ENCODE measurements at regions of chr2 and their contacts with region 1.

Region 1: DNA sequence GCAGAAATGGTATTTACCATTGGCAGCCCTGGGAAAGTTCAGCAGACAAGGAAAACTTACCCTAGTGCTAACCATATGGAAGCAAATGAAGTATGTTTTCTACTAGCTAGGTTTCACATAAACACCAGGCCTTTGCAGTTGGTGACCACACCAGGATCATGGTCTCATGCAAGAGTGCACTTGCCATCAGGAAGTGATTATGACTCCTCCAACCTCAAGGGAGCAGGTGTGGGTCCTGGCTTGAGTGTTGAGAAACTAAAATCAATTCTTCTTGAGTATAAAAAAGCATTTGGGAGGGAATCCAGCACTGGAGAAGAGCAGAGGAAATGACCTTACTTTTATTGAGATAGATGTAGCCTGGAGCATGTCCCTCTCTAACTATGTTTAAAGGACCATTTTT is 56.8 kb upstream of the SPAG16 start:
- DNase-seq: no peak
- CTCF ChIP-seq: no peak

Region 2: GRCh38 chr2:213151437-213152064 is 75.9 kb before region 1 on chr2 and contains the start of gene IKZF2:
- in situ Hi-C with region 1: loop called (anchors 5 kb)
- DNase-seq: peak; percentile 83
- CTCF ChIP-seq: no peak